Activated CD4-positive, alpha-beta memory T cell treated with anti-CD3 and anti-CD28 coated beads for 36 hours (primary cell): ENCODE measurements at regions of chr17 and their contacts with region 1.

Region 1: GRCh38 chr17:8173056-8173870 is 2.9 kb downstream of the TMEM107 start:
- DNase-seq: peak; percentile 89
- H3K4me3 Mint-ChIP-seq: peak overlapping the region; percentile 77
- H3K27ac Mint-ChIP-seq: peak overlapping the region; percentile 98
- H3K4me1 Mint-ChIP-seq: peaks cover 40% of the 10 kb centered on the region
- H3K27me3 Mint-ChIP-seq: peaks cover 4% of the 10 kb centered on the region

Region 2: GRCh38 chr17:8001976-8002720 is 171.1 kb before region 1 on chr17 and contains the start of gene GUCY2D:
- CTCF ChIA-PET with region 1: no interaction called
- POLR2A ChIA-PET with region 1: no interaction called
- intact Hi-C with region 1: no loop called
- DNase-seq: no peak
- H3K4me3 Mint-ChIP-seq: no peak within 1 kb of the TSS
- H3K27ac Mint-ChIP-seq: no peak within 1 kb of the TSS
- H3K4me1 Mint-ChIP-seq: peaks cover 6% of the 10 kb centered on the region
- H3K27me3 Mint-ChIP-seq: peaks cover 29% of the 10 kb centered on the region
- total RNA-seq, gene GUCY2D: not detected

Region 3: DNA sequence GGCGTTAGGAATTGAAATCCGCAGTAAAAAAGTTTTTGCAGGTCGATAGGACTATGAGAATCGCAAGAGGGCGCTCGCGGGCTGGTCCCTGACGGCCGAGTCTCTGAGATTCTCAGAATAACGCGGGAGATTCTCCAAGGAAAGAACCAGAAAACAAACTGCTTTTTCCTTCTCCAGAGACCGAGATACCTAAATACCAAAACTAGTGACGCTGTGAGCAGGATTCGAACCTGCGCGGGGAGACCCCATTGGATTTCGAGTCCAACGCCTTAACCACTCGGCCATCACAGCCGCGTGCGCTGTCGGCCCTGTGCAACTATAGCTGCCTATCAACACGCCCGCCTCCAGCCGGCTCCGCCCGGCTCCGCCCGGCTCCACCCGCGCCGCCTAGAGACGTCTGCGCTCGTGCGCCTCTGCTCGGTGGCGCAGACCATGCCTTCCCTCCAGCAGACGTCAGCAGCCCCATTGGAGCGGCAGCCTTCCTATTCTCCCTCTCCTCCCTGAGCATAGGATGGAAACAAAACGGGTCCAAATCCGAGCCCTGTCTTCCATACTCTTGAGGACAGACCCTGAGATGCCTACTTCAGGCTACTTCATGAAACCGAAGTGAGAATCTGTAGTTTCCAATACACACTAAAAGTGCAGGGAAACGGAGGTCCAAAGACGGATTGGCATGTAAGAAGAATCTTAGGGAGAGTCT is 34.4 kb before region 1 on chr17:
- CTCF ChIA-PET with region 1: interaction called, 7 read pairs
- POLR2A ChIA-PET with region 1: interaction called, 28 read pairs
- intact Hi-C with region 1: loop called (anchors 1 kb)
- DNase-seq: peak; percentile 98
- H3K4me3 Mint-ChIP-seq: no peak overlapping the region
- H3K27ac Mint-ChIP-seq: no peak overlapping the region
- H3K4me1 Mint-ChIP-seq: peaks cover 2% of the 10 kb centered on the region
- H3K27me3 Mint-ChIP-seq: peaks cover 1% of the 10 kb centered on the region

Region 4: GRCh38 chr17:8156246-8156992 is 16.8 kb before region 1 on chr17:
- CTCF ChIA-PET with region 1: interaction called, 10 read pairs
- POLR2A ChIA-PET with region 1: interaction called, 146 read pairs
- intact Hi-C with region 1: loop called (anchors 1 kb)
- DNase-seq: peak; percentile 100
- H3K4me3 Mint-ChIP-seq: no peak overlapping the region
- H3K27ac Mint-ChIP-seq: no peak overlapping the region
- H3K4me1 Mint-ChIP-seq: peaks cover 56% of the 10 kb centered on the region
- H3K27me3 Mint-ChIP-seq: no peaks in the 10 kb centered on the region

Region 5: DNA sequence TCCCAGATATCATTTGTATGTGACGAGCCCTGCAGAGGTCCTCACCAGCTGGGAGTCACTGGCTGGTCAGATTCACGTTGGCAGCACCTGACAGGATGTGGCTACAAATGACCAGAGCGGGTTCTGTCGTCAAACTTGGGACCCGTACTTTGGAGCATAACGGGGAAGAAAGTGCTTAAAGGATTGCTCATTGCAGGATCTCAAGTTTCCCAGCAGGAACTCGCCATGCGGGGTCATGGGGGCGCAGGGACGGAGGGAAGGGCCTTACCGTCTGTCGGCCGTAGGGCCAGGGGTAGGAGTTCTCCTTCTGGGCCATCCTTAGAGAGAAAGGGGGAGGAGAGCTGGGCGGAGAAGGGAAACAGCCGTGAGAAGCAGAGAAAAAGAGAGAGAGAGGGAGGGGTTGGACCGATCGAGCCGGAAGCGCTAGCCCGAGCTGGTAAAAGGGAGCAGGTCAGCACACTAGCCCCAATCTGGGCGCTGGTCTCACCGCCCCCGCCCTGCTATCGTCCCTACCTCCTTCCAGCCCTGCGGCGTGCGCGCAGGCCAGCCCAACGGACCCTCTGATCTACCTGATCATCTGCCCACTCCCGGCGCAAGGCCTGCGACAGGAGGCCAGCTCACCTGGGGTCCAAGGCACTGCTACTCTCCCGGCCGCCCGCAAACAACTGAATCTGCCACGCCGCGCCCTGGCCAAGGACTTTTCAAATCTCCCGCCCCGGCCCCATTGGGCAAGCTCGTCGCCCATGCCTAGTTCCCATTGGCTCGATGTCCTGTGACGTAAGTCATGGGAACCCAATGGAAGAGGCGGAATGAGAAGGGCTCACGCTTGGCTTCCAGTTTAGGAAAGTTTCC is 36.9 kb after region 1 on chr17 and contains the start of gene AURKB:
- CTCF ChIA-PET with region 1: no interaction called
- POLR2A ChIA-PET with region 1: interaction called, 14 read pairs
- intact Hi-C with region 1: no loop called
- DNase-seq: peak; percentile 96
- H3K4me3 Mint-ChIP-seq: peak within 1 kb of the TSS; percentile 99
- H3K27ac Mint-ChIP-seq: peak within 1 kb of the TSS; percentile 97
- H3K4me1 Mint-ChIP-seq: peaks cover 23% of the 10 kb centered on the region
- H3K27me3 Mint-ChIP-seq: no peaks in the 10 kb centered on the region
- total RNA-seq, gene AURKB: 184 TPM

Region 6: GRCh38 chr17:8248751-8249607 is 75.7 kb after region 1 on chr17 and contains the start of gene PFAS:
- CTCF ChIA-PET with region 1: no interaction called
- POLR2A ChIA-PET with region 1: interaction called, 37 read pairs
- intact Hi-C with region 1: loop called (anchors 1 kb)
- DNase-seq: peak; percentile 98
- H3K4me3 Mint-ChIP-seq: peak within 1 kb of the TSS; percentile 99
- H3K27ac Mint-ChIP-seq: peak within 1 kb of the TSS; percentile 97
- H3K4me1 Mint-ChIP-seq: peaks cover 38% of the 10 kb centered on the region
- H3K27me3 Mint-ChIP-seq: no peaks in the 10 kb centered on the region
- total RNA-seq, gene PFAS: 102 to 105 TPM